ENCODE measurements at regions of chr9 and their contacts with region 1.

Region 1: DNA sequence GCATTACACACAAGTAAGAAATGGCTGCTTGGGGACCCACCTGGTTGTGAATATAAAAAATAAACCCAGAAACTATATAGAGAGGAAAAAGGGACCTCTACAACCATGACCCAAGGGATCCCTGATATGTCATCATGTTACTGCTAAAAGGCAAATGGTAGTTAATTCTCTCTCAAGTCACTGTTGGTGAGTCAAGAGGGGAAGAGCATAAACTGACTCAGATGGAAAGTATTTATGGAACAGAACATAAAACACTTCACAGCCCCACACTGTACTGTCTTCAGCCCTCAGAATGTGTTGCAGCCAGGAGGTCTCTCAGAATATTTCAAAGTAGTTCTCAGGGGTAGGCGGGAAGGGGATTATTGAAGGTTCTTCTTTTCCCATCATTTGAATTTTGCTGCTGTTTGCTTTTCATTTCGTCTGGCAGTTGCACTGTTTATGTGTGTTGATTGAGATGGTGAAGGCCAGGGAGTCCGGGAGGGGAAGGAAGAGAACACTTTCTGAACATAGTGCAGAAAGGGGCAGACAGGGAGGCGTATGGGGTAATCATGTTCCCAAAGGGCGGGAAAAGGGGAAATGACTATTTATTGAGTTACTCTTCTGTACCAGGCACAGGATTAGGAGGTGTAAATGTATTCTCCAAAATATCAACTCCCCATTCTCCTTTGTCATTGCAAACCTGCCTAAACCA is 85.5 kb downstream of the TEK start:
- DNase-seq: no peak
- ATAC-seq: no peak
- H3K4me3 ChIP-seq: no peak overlapping the region
- H3K27ac ChIP-seq: no peak overlapping the region
- H3K4me1 ChIP-seq: peaks cover 0 to 12% of the 10 kb centered on the region in 2 donors
- H3K27me3 ChIP-seq: no peaks in the 10 kb centered on the region
- CTCF ChIP-seq: no peak
- POLR2A ChIP-seq: no peak

Region 2: GRCh38 chr9:27117489-27118135 is 76.9 kb before region 1 on chr9:
- in situ Hi-C with region 1: no loop called
- intact Hi-C with region 1: loop called (anchors 10 kb)
- DNase-seq: peak; percentile 35 to 61
- ATAC-seq: peak; percentile 74 to 80
- H3K4me3 ChIP-seq: no peak overlapping the region
- H3K27ac ChIP-seq: peak overlapping the region; percentile 5 to 74 (median 70)
- H3K4me1 ChIP-seq: peaks cover 7 to 9% of the 10 kb centered on the region in 2 donors
- H3K27me3 ChIP-seq: no peaks in the 10 kb centered on the region
- CTCF ChIP-seq: no peak
- POLR2A ChIP-seq: no peak